ENCODE measurements at regions of chr3 and their contacts with region 1.

Region 1: DNA sequence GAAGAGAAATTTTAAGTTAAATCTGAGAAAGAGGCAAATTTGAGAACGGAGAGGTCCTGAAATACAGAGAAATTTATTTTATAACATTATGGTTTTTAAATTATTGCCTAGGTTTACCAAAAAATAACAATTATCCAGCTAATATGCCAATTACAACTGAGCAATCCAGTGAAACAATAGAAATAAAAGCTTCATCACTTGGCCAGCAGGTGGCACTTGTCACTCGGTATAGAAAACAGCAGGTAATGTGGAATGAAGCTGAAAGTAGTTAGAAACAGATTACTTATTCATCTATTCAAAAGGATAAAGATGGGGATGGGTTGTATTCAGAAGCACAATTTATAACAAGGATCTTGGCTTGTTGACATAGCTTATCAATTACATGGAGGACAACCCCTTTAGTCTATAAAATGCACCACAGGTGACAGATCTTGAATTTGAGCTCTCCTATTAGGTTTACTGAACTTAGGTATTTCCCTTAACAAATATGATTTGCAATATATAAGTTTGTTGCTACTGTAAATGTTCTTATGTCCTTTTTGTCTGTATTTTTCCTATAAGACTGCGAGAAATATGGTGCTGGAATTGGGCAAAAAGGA is 70.1 kb upstream of the GUCA1C start:
- DNase-seq: peak; percentile 19
- ATAC-seq: peak; percentile 91
- H3K4me3 ChIP-seq: no peak overlapping the region
- H3K27ac ChIP-seq: no peak overlapping the region
- H3K4me1 ChIP-seq: no peaks in the 10 kb centered on the region
- H3K27me3 ChIP-seq: no peaks in the 10 kb centered on the region
- CTCF ChIP-seq: peak; percentile 59 to 75 (median 68)
- EP300 ChIP-seq: no peak
- POLR2A ChIP-seq: no peak
- RAD21 ChIP-seq: peak; percentile 79

Region 2: GRCh38 chr3:108489771-108490170 is 534.0 kb before region 1 on chr3:
- CTCF ChIA-PET with region 1: interaction called, 3 read pairs
- POLR2A ChIA-PET with region 1: no interaction called
- RAD21 ChIA-PET with region 1: interaction called, 3 read pairs
- SMC1A ChIA-PET with region 1: no interaction called
- in situ Hi-C with region 1: no loop called
- intact Hi-C with region 1: loop called (anchors 10 kb)
- DNase-seq: peak; percentile 31
- ATAC-seq: peak; percentile 90
- H3K4me3 ChIP-seq: no peak overlapping the region
- H3K27ac ChIP-seq: no peak overlapping the region
- H3K4me1 ChIP-seq: no peaks in the 10 kb centered on the region
- H3K27me3 ChIP-seq: no peaks in the 10 kb centered on the region
- CTCF ChIP-seq: peak; percentile 69 to 79 (median 70)
- EP300 ChIP-seq: no peak
- POLR2A ChIP-seq: no peak
- RAD21 ChIP-seq: peak; percentile 97

Region 3: GRCh38 chr3:109045271-109046040 is 21.7 kb after region 1 on chr3:
- CTCF ChIA-PET with region 1: interaction called, 25 read pairs
- POLR2A ChIA-PET with region 1: no interaction called
- RAD21 ChIA-PET with region 1: interaction called, 20 read pairs
- SMC1A ChIA-PET with region 1: interaction called, 15 read pairs
- in situ Hi-C with region 1: no loop called
- intact Hi-C with region 1: no loop called
- DNase-seq: no peak
- ATAC-seq: peak; percentile 34
- H3K4me3 ChIP-seq: no peak overlapping the region
- H3K27ac ChIP-seq: no peak overlapping the region
- H3K4me1 ChIP-seq: no peaks in the 10 kb centered on the region
- H3K27me3 ChIP-seq: no peaks in the 10 kb centered on the region
- CTCF ChIP-seq: no peak
- EP300 ChIP-seq: no peak
- POLR2A ChIP-seq: no peak
- RAD21 ChIP-seq: no peak

Region 4: GRCh38 chr3:109059264-109059663 is 35.5 kb after region 1 on chr3:
- CTCF ChIA-PET with region 1: interaction called, 15 read pairs
- POLR2A ChIA-PET with region 1: no interaction called
- RAD21 ChIA-PET with region 1: interaction called, 10 read pairs
- SMC1A ChIA-PET with region 1: interaction called, 14 read pairs
- in situ Hi-C with region 1: no loop called
- intact Hi-C with region 1: no loop called
- DNase-seq: no peak
- ATAC-seq: peak; percentile 92
- H3K4me3 ChIP-seq: no peak overlapping the region
- H3K27ac ChIP-seq: no peak overlapping the region
- H3K4me1 ChIP-seq: no peaks in the 10 kb centered on the region
- H3K27me3 ChIP-seq: no peaks in the 10 kb centered on the region
- CTCF ChIP-seq: no peak
- EP300 ChIP-seq: peak in 1 of 2 experiments; percentile 88; a peak in 2 of 4 replicates
- POLR2A ChIP-seq: no peak
- RAD21 ChIP-seq: no peak

Region 5: GRCh38 chr3:109081746-109082510 is 58.2 kb after region 1 on chr3:
- CTCF ChIA-PET with region 1: interaction called, 224 read pairs
- POLR2A ChIA-PET with region 1: interaction called, 6 read pairs
- RAD21 ChIA-PET with region 1: interaction called, 97 read pairs
- SMC1A ChIA-PET with region 1: interaction called, 127 read pairs
- in situ Hi-C with region 1: loop called (anchors 5 kb)
- intact Hi-C with region 1: loop called (anchors 1 kb)
- DNase-seq: peak; percentile 86
- ATAC-seq: peak; percentile 100
- H3K4me3 ChIP-seq: peak overlapping the region; percentile 18; the same call in 1 of the 2 replicates
- H3K27ac ChIP-seq: peak overlapping the region; percentile 72
- H3K4me1 ChIP-seq: peaks cover 5% of the 10 kb centered on the region
- H3K27me3 ChIP-seq: no peaks in the 10 kb centered on the region
- CTCF ChIP-seq: peak; percentile 78 to 84 (median 78)
- EP300 ChIP-seq: peak in 1 of 2 experiments; percentile 62; a peak in 1 of 4 replicates
- POLR2A ChIP-seq: no peak
- RAD21 ChIP-seq: peak; percentile 98

Region 6: GRCh38 chr3:109098079-109098644 is 74.4 kb after region 1 on chr3:
- CTCF ChIA-PET with region 1: interaction called, 25 read pairs
- POLR2A ChIA-PET with region 1: no interaction called
- RAD21 ChIA-PET with region 1: interaction called, 6 read pairs
- SMC1A ChIA-PET with region 1: interaction called, 17 read pairs
- in situ Hi-C with region 1: no loop called
- intact Hi-C with region 1: no loop called
- DNase-seq: no peak
- ATAC-seq: peak; percentile 84
- H3K4me3 ChIP-seq: no peak overlapping the region
- H3K27ac ChIP-seq: no peak overlapping the region
- H3K4me1 ChIP-seq: no peaks in the 10 kb centered on the region
- H3K27me3 ChIP-seq: no peaks in the 10 kb centered on the region
- CTCF ChIP-seq: peak in 2 of 3 experiments; percentile 50 to 56; a peak in 4 of 6 replicates
- EP300 ChIP-seq: no peak
- POLR2A ChIP-seq: no peak
- RAD21 ChIP-seq: peak; percentile 27; the same call in 1 of the 2 replicates